BJ (cell line): ENCODE measurements at regions of chr4 and their contacts with region 1.

Region 1: DNA sequence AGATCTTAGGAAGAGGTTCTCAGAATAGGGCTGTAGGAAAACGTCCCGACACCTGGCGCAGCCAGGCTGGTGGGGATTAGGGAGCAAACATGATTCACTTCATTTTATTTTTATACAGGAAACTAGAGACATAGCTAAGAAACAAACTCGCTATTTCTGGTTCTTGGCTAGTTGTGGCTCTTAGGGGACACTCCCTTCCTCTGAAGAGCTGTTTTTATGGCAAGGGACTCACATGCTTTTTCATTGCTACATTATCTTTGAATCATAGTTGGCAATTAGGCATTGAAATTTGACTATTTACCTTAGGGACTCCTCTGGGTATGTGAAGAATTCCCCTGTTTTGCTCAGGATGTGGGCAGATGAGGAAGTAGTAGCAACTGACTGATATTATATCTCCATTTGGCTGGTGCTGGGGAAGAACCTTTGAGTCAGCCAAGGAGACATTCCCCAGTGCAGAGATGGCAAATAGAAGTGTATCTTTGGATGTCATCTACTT is 174.5 kb downstream of the SMIM20 start:
- DNase-seq: peak; percentile 68
- H3K4me3 ChIP-seq: no peak overlapping the region
- H3K27me3 ChIP-seq: peaks cover 18% of the 10 kb centered on the region
- CTCF ChIP-seq: no peak

Region 2: DNA sequence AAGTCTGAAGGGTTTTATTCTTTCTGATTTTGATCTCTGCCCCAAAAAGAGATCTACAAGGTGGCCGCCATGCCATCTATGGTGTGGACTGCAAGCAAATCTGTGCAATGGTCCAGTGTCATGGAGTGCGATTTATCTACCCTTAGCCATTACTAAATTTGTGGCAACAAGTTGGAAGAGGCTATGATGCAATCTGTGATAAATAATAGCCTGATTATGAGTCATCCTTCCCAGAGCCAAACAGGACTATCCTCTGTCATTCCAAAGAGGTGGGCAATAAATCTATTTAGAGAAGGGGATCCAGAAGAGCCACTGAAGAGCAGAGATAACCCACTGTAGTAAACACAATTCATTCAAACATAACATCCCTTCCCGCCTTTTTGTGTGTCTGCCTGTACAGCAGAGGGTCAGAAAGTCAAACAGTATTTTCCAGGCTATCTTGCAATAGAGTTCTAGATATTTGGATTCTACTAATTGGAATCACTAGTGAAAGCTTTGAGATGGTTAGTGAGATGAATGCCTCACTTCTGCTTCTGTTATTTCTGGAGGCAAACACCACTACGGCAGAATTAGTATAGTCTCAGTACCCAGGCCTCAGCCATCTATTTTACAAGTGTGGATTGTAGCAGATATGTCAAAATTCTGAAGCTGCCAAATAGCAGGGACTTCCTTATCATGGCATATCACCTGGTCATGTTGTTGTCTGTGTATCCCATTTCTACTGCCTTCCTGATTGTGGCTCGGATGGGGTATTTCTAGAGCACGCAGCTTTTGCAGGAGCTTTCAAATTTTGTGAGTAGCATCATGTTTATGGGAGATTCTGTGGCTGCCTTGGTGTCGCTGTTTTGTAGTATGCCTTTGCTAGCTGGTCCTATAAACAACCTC is 17.6 kb after region 1 on chr4:
- CTCF ChIA-PET with region 1: interaction called, 10 read pairs
- POLR2A ChIA-PET with region 1: no interaction called
- DNase-seq: peak; percentile 33
- H3K4me3 ChIP-seq: no peak overlapping the region
- H3K27me3 ChIP-seq: peaks cover 2% of the 10 kb centered on the region
- CTCF ChIP-seq: no peak

Region 3: GRCh38 chr4:26116092-26116491 is 27.6 kb after region 1 on chr4:
- CTCF ChIA-PET with region 1: no interaction called
- POLR2A ChIA-PET with region 1: no interaction called
- DNase-seq: no peak
- H3K4me3 ChIP-seq: no peak overlapping the region
- H3K27me3 ChIP-seq: peaks cover 7% of the 10 kb centered on the region
- CTCF ChIP-seq: no peak